ENCODE measurements at regions of chr2 and their contacts with region 1.

Region 1: DNA sequence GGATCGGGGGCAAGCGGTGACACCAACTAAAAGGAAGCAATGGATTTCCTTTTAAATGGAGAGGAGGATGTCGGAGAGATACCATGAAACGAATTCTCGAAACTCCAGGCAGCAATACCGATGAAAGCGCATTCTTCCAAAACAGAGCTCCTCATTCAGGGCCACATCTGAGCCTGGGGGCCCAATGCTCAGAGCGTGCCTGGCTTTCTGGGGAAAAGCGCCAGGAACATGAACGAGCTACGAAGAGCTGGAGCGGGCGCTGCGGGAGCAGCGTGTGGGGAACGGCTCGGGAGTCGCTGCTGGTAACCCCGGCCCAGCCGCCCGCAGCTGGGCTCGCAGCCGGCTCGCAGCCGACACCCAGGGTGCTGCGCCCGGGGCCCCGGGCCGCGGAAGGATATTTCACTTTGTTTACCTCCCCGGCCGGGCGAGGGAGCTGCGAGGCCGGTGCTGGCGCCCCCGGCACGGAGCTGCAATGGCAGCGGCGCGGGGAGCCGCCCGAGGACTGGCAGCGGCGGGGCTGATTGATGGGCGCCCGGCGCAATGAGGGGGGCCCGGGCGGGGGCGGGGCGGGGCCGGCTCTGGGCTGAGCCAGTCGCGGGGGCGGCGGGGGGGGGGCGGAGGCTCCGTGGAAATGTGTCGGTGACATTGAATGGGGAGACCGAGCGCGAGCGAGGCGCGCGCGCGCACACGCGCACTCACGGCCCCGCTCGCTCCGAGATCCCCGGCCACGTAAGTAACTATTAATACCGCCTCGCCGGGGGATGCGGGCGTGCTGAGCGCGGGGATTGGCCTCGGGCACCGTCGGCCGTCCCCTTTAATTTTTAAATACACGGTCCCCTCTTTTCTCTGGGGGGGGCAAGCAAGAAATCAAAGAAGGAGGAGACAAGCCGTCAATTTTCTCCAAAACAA is at the start of gene TRIB2:
- DNase-seq: peak; percentile 82
- ATAC-seq: peak; percentile 53
- H3K4me3 ChIP-seq: peak within 1 kb of the TSS; percentile 95
- H3K27ac ChIP-seq: peak within 1 kb of the TSS; percentile 99
- H3K4me1 ChIP-seq: peaks cover 34% of the 10 kb centered on the region
- H3K27me3 ChIP-seq: no peaks in the 10 kb centered on the region
- CTCF ChIP-seq: peak; percentile 34; the same call in 1 of the 2 replicates
- total RNA-seq, gene TRIB2: 35.2 and 51.8 TPM in 2 replicates

Region 2: DNA sequence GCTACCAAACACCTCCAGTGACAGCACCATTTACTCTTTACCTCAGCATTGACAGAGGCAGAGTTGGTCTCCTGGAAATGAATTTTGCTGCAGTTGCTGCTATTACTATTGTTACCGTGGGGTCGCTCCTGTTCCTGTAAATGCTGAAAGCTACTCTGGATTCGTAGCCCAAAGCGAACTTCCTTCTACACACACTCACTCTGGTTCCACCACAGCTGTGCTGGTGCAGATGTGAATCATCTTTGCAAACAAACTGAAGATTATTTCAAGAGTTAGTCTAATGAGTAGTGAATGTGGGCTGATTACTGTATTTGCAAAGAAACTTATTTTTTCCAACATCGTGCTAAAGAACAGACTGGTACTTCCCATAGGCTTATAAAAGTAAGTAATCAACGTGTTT is 666.1 kb before region 1 on chr2:
- CTCF ChIA-PET with region 1: no interaction called
- POLR2A ChIA-PET with region 1: no interaction called
- intact Hi-C with region 1: loop called (anchors 1 kb)
- DNase-seq: peak; percentile 90
- ATAC-seq: peak; percentile 83
- H3K4me3 ChIP-seq: no peak overlapping the region
- H3K27ac ChIP-seq: peak overlapping the region; percentile 78
- H3K4me1 ChIP-seq: peaks cover 42% of the 10 kb centered on the region
- H3K27me3 ChIP-seq: no peaks in the 10 kb centered on the region
- CTCF ChIP-seq: peak; percentile 76

Region 3: GRCh38 chr2:12282780-12283695 is 433.5 kb before region 1 on chr2:
- CTCF ChIA-PET with region 1: no interaction called
- POLR2A ChIA-PET with region 1: no interaction called
- intact Hi-C with region 1: loop called (anchors 1 kb)
- DNase-seq: no peak
- ATAC-seq: no peak
- H3K4me3 ChIP-seq: no peak overlapping the region
- H3K27ac ChIP-seq: no peak overlapping the region
- H3K4me1 ChIP-seq: peaks cover 36% of the 10 kb centered on the region
- H3K27me3 ChIP-seq: no peaks in the 10 kb centered on the region
- CTCF ChIP-seq: no peak

Region 4: DNA sequence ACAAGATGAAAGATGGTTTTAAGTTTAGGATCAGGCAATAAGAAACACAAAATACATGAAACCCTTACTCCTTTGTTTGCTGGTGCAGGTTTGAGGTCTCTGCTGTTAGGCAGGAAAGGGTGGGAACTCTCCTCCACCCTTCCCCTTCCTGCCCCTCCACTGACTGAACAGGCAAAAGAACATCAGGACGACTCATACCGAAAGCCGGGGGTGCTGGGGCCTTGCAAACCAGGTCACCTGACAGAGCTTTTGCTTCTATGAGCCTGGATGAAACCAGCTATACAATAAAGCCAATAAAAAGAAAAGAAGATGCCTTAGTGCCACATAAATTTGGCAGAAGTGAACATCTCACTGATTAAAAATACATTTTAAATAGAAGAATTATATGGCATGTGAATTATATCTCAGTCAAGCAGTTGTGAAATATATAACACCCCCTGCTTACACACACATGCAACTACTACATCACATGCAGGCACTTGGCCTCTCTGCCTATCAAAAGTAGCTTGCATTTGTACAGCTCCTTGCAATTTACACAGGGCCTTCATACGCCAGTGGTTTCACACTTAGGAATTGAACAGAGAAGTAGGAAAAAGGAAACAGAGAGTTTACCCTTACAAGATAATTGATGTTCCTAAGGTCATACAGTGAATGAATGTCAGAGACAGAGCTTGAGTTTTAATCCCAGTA is 214.9 kb before region 1 on chr2:
- CTCF ChIA-PET with region 1: no interaction called
- POLR2A ChIA-PET with region 1: no interaction called
- intact Hi-C with region 1: loop called (anchors 5 kb)
- DNase-seq: peak; percentile 27
- ATAC-seq: no peak
- H3K4me3 ChIP-seq: no peak overlapping the region
- H3K27ac ChIP-seq: no peak overlapping the region
- H3K4me1 ChIP-seq: peaks cover 33% of the 10 kb centered on the region
- H3K27me3 ChIP-seq: no peaks in the 10 kb centered on the region
- CTCF ChIP-seq: no peak

Region 5: GRCh38 chr2:12587729-12588522 is 128.6 kb before region 1 on chr2:
- CTCF ChIA-PET with region 1: no interaction called
- POLR2A ChIA-PET with region 1: interaction called, 13 read pairs
- intact Hi-C with region 1: no loop called
- DNase-seq: peak; percentile 80
- ATAC-seq: peak; percentile 96
- H3K4me3 ChIP-seq: 0 out of 2 replicates have a peak overlapping the region, but pooled peaks have one; percentile 9
- H3K27ac ChIP-seq: peak overlapping the region; percentile 56
- H3K4me1 ChIP-seq: peaks cover 25% of the 10 kb centered on the region
- H3K27me3 ChIP-seq: no peaks in the 10 kb centered on the region
- CTCF ChIP-seq: no peak

Region 6: DNA sequence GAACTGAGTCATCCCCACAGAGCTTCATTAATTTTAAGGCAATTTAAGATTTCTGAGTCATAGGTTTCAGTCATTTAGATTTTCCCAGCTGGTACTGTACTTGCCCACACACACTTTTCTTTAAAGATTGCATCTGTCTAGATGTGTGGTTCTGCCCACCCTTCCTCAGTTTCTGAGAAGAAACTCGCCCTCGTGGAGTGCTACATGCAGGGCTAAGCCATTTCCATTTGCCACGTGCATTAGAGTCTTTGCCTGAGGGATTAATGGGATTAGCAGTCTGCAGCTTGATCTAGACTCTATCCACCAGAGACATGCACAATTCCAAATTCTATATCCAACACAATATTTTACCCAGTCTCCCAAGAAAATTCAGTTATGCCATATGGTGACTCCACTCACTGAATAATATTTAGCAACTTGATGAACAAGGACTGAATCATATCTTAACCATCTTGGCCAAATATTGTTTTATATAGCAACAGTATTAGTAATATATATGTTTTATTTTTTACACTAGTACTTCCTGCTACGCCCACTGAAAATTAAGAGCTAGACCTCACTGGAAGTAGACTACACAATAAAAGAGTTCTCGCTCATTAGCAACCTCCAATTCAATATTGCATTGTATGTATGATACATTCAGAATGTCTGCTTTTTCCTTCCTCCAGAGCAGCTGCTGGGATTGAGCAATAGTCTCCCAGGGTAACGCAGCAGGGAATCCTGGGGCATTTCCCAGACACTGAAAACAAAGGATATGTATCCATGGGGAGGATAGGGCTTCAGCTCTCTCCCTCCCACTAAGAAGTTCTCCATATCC is 14.0 kb before region 1 on chr2:
- CTCF ChIA-PET with region 1: interaction called, 13 read pairs
- POLR2A ChIA-PET with region 1: interaction called, 15 read pairs
- intact Hi-C with region 1: loop called (anchors 1 kb)
- DNase-seq: peak; percentile 94
- ATAC-seq: peak; percentile 79
- H3K4me3 ChIP-seq: peak overlapping the region; percentile 28; the same call in 1 of the 2 replicates
- H3K27ac ChIP-seq: peak overlapping the region; percentile 99
- H3K4me1 ChIP-seq: peaks cover 57% of the 10 kb centered on the region
- H3K27me3 ChIP-seq: no peaks in the 10 kb centered on the region
- CTCF ChIP-seq: no peak

Region 7: DNA sequence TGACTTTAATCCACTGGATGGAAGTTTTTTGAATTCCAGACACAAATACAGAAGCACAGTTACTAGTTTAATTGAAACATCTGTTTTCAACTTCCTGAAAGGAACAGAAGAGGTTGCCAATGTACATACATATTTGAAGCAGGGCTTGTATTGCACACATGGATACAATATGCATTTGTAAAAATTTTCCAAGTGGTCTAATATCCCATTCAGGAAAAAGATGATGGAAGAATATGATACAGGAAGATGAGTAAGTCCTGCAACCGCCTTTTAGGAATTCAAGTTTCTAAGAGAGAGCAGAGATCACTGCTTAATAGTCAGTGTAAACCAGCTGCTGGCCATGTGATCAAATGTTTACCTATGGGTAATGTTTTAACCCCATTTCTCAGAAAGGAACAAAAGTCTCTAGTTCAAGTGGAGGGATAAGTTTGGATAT is 265.6 kb after region 1 on chr2:
- CTCF ChIA-PET with region 1: no interaction called
- POLR2A ChIA-PET with region 1: no interaction called
- intact Hi-C with region 1: no loop called
- DNase-seq: no peak
- ATAC-seq: no peak
- H3K4me3 ChIP-seq: no peak overlapping the region
- H3K27ac ChIP-seq: no peak overlapping the region
- H3K4me1 ChIP-seq: no peaks in the 10 kb centered on the region
- H3K27me3 ChIP-seq: no peaks in the 10 kb centered on the region
- CTCF ChIP-seq: no peak

Region 8: DNA sequence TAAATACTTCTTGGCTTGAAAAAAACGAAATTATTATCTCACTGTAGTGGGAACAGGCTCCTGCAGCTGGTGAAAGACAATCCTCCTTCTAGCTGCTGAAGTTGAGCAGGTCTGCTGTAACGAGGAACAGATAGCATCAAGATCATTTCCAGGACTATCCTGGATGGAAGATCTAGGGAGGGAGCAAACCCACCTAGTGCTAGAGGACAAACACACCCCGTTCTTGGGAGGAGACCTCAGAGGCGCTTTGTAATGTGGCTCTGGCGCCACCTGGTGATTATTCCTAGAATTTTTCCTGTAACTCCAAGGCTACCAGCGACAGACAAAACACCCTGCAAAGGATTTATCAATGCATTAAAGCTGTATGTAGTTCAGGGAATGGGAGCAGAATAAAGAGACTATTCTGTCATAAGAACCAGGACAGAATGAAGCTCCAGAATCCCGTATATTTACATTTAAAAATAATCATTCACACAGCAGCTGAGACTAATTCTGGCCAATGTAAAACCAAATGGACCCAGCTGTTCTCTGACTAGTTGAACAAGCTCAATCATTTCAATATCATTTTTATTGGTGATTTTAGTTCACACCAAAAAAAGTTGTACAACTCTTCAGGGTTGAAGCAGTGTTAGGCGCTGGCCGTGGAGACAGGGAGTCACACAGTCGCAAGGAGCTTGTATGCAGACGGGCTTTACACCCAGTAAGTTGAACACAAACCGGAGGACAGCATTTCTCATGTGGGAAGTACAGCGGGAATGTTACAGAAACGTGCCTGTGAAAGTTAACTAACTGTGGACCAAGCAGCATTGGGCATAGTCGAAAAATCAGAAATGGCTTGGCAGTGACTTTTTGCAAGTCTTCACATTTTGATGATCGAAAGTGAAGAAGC is 290.5 kb after region 1 on chr2:
- CTCF ChIA-PET with region 1: interaction called, 9 read pairs
- POLR2A ChIA-PET with region 1: interaction called, 3 read pairs
- intact Hi-C with region 1: loop called (anchors 1 kb)
- DNase-seq: peak; percentile 87
- ATAC-seq: peak; percentile 95
- H3K4me3 ChIP-seq: peak overlapping the region; percentile 62
- H3K27ac ChIP-seq: no peak overlapping the region
- H3K4me1 ChIP-seq: peaks cover 7% of the 10 kb centered on the region
- H3K27me3 ChIP-seq: no peaks in the 10 kb centered on the region
- CTCF ChIP-seq: peak; percentile 89

Measured in PC-3 (cell line).